Naive thymus-derived CD8-positive, alpha-beta T cell (primary cell): ENCODE measurements at regions of chr18 and their contacts with region 1.

Region 1: GRCh38 chr18:45690975-45691815 is 32.8 kb upstream of the SLC14A1 start:
- DNase-seq: peak; percentile 56 to 85 (median 71)
- ATAC-seq: no peak
- H3K4me3 Mint-ChIP-seq: peak overlapping the region in 5 of 10 donors; percentile 27 to 54 (median 50)
- H3K27ac Mint-ChIP-seq: peak overlapping the region in 4 of 10 donors; percentile 28 to 73 (median 40)
- H3K4me1 Mint-ChIP-seq: peaks cover 31 to 51% (median 44%) of the 10 kb centered on the region in 4 donors
- H3K27me3 Mint-ChIP-seq: peaks cover 0 to 4% (median 0%) of the 10 kb centered on the region in 5 donors

Region 2: DNA sequence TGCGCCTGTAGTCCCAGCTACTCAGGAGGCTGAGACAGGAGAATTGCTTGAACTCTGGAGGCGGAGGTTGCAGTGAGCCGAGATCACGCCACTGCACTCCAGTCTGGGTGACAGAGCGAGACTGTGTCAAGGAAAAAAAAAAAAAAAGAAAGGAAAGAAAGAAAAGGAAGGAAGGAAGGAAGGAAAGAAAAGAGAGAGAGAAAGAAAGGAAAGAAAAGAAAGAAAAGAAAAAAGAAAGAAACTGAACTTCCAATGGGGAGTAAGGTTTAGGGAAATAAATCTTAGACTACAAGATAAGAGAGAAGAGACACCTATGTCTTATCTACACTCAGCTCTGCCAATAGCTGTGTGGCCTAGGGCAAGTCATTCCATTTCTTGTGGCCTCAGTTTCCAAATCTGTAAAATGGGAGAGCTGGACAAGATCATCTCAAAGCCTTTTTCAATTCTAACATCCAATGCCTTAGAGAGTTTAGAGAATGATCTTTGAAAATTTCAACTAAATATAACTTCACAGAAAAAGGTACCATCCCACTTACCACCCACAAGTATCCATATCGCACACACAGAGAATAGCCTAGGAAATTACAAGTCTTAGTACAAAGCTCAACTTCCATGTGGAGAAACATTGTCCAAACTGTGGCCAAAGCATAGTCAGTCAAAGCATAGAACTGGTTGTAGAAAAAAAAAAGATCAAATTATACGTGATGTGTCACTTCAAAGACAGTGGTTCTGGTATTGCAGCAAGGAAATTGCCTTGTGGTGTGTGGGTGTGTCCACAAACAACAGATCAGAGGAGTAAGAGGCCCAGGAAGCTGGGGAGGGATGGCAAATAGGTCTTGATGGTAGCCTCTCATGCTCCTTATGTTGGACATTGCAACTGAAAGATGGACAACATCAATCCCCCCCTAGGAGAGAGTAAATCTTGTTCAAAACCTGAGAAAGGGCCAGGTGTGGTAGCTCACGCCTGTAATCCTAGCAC is 33.5 kb before region 1 on chr18:
- POLR2A ChIA-PET with region 1: interaction called, 95 read pairs
- DNase-seq: peak in 6 of 10 donors; percentile 27 to 68 (median 44)
- ATAC-seq: peak; percentile 79 to 93
- H3K4me3 Mint-ChIP-seq: peak overlapping the region; percentile 0 to 60 (median 34)
- H3K27ac Mint-ChIP-seq: peak overlapping the region in 3 of 10 donors; percentile 0 to 68 (median 53)
- H3K4me1 Mint-ChIP-seq: peaks cover 16 to 36% (median 25%) of the 10 kb centered on the region in 4 donors
- H3K27me3 Mint-ChIP-seq: peaks cover 0 to 8% (median 0%) of the 10 kb centered on the region in 5 donors

Region 3: GRCh38 chr18:45664824-45665763 is 26.1 kb before region 1 on chr18:
- POLR2A ChIA-PET with region 1: interaction called, 95 read pairs
- DNase-seq: peak; percentile 22 to 82 (median 67)
- ATAC-seq: peak; percentile 74 to 78
- H3K4me3 Mint-ChIP-seq: peak overlapping the region in 9 of 10 donors; percentile 49 to 78 (median 71)
- H3K27ac Mint-ChIP-seq: peak overlapping the region; percentile 1 to 84 (median 46)
- H3K4me1 Mint-ChIP-seq: peaks cover 24 to 61% (median 57%) of the 10 kb centered on the region in 4 donors
- H3K27me3 Mint-ChIP-seq: peaks cover 0 to 1% (median 0%) of the 10 kb centered on the region in 5 donors

Region 4: DNA sequence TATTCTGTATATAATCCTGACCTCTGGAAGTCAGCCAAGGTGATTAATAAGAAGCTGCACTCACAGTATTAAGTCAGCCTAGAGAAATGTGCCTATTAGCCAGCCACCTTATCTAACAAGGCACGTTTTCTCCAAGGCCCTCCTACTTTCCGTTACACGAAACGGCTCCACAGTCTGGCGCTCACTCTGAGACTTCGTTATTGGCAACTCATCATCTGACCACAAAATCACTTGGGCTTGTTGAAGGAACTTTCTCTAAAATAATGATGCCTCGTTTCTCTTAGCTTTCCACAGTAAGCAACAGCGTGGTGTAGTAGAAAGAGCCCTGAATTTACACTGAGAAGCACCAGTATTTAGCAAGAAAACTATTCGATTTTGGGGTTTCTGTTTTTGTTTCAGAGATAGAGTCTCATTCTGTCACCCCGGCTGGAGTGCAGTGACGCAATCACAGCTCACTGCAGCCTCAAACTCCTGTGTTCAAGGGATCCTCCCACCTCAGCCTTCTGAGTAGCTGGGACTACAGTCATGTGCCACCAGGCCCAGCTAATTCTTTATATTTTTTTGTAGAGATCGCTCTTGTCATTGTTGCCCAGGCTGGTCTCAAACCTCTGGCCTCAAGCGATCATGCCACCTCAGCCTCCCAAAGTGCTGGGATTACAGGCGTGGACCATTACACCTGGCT is 20.8 kb before region 1 on chr18:
- POLR2A ChIA-PET with region 1: interaction called, 95 read pairs
- DNase-seq: peak in 5 of 10 donors; percentile 17 to 34 (median 22)
- ATAC-seq: peak; percentile 69 to 70
- H3K4me3 Mint-ChIP-seq: peak overlapping the region in 9 of 10 donors; percentile 9 to 72 (median 49)
- H3K27ac Mint-ChIP-seq: peak overlapping the region in 8 of 10 donors; percentile 47 to 87 (median 54)
- H3K4me1 Mint-ChIP-seq: peaks cover 21 to 59% (median 56%) of the 10 kb centered on the region in 4 donors
- H3K27me3 Mint-ChIP-seq: peaks cover 0 to 2% (median 0%) of the 10 kb centered on the region in 5 donors